Heart left ventricle (tissue), 16 donors: ENCODE measurements at regions of chr6 and their contacts with region 1.

Region 1: GRCh38 chr6:57267586-57268293 is 45.6 kb upstream of the RAB23 start:
- DNase-seq: peak in 3 of 5 donors; percentile 32 to 39 (median 33)
- ATAC-seq: peak; percentile 64 to 96 (median 86)
- H3K4me3 ChIP-seq: no peak overlapping the region
- H3K27ac ChIP-seq: peak overlapping the region in 2 of 12 donors; percentile 11 to 30
- H3K4me1 ChIP-seq: peaks cover 0 to 22% (median 0%) of the 10 kb centered on the region in 12 donors
- H3K27me3 ChIP-seq: no peaks in the 10 kb centered on the region
- CTCF ChIP-seq: peak in 8 of 12 donors; percentile 40 to 59 (median 48)
- POLR2A ChIP-seq: no peak

Region 2: DNA sequence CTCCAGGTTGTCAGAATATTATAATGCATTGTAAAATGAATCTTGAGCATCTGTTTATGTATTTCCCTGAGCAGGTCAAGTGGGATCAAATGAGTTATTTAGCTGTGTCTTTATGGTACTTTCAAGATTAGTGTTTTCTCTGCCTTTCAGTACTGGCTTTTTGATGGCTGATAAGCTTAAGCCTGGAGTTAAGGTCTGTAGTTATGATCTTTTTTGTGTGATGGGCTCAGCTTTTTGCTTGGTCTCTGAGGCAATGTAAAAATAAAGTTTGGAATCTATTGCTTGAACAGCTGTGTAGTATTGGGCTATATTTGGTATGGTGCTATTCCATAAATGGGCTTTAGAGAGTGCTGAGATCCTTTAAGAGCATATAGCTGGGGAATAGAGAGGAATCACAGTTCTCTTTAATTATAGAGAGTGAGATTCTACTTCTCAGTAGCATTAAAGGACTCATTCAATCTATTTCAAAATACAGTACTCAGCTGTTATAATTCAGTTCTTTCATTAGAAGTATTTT is 137.0 kb before region 1 on chr6:
- intact Hi-C with region 1: no loop called
- DNase-seq: no peak
- ATAC-seq: peak in 2 of 4 donors; percentile 58 to 62
- H3K4me3 ChIP-seq: no peak overlapping the region
- H3K27ac ChIP-seq: no peak overlapping the region
- H3K4me1 ChIP-seq: peaks cover 0 to 16% (median 11%) of the 10 kb centered on the region in 12 donors
- H3K27me3 ChIP-seq: no peaks in the 10 kb centered on the region
- CTCF ChIP-seq: peak in 2 of 12 donors; percentile 7 to 12
- POLR2A ChIP-seq: no peak

Region 3: GRCh38 chr6:57242505-57242904 is 25.2 kb before region 1 on chr6:
- intact Hi-C with region 1: no loop called
- DNase-seq: no peak
- ATAC-seq: peak in 3 of 4 donors; percentile 39 to 78 (median 59)
- H3K4me3 ChIP-seq: no peak overlapping the region
- H3K27ac ChIP-seq: peak overlapping the region in 2 of 12 donors; percentile 6 to 14
- H3K4me1 ChIP-seq: peaks cover 0 to 5% (median 0%) of the 10 kb centered on the region in 12 donors
- H3K27me3 ChIP-seq: no peaks in the 10 kb centered on the region
- CTCF ChIP-seq: no peak
- POLR2A ChIP-seq: no peak

Region 4: DNA sequence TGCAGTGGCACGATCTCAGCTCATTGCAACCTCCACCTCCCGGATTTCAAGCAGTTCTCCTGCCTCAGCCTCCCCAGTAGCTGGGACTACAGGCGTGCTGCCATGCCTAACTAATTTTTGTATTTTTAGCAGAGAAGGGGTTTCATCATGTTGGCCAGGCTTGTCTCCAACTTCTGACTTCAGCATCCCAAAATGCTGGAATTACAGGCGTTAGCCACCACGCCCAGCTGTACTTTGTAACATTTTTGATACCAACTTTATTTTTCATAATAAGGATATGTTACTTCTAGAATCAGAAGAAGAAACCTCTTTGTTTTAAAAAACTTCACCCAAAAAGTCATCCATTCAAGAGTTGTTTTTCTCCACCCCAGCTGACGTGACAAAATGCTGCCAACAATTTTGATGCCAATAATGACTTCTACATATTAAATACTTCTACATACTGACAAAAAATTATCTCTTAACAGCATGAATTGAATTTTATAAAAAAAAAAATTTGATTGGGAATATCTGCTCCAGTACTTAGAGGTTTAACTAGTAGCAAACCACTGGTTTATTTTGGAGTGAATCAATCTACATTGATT is 27.2 kb after region 1 on chr6:
- intact Hi-C with region 1: loop called in 3 of 10 experiments (anchors 5 kb)
- DNase-seq: peak in 1 of 5 donors; percentile 25
- ATAC-seq: peak in 2 of 4 donors; percentile 26 to 67
- H3K4me3 ChIP-seq: no peak overlapping the region
- H3K27ac ChIP-seq: peak overlapping the region in 5 of 12 donors; percentile 3 to 52 (median 36)
- H3K4me1 ChIP-seq: peaks cover 0 to 6% (median 0%) of the 10 kb centered on the region in 12 donors
- H3K27me3 ChIP-seq: no peaks in the 10 kb centered on the region
- CTCF ChIP-seq: no peak
- POLR2A ChIP-seq: no peak